ENCODE measurements at regions of chr10 and their contacts with region 1.

Region 1: GRCh38 chr10:6300106-6300783 is 97.5 kb downstream of the PFKFB3 start:
- DNase-seq: peak; percentile 48
- ATAC-seq: peak; percentile 80
- H3K4me3 Mint-ChIP-seq: peak overlapping the region; percentile 75
- H3K27ac Mint-ChIP-seq: peak overlapping the region; percentile 96
- H3K4me1 Mint-ChIP-seq: peaks cover 82% of the 10 kb centered on the region
- H3K27me3 Mint-ChIP-seq: no peaks in the 10 kb centered on the region
- CTCF ChIP-seq: no peak

Region 2: GRCh38 chr10:6247041-6247712 is 53.1 kb before region 1 on chr10:
- CTCF ChIA-PET with region 1: no interaction called
- POLR2A ChIA-PET with region 1: interaction called, 11 read pairs
- intact Hi-C with region 1: no loop called
- DNase-seq: no peak
- ATAC-seq: no peak
- H3K4me3 Mint-ChIP-seq: no peak overlapping the region
- H3K27ac Mint-ChIP-seq: no peak overlapping the region
- H3K4me1 Mint-ChIP-seq: peaks cover 3% of the 10 kb centered on the region
- H3K27me3 Mint-ChIP-seq: no peaks in the 10 kb centered on the region
- CTCF ChIP-seq: no peak

Region 3: GRCh38 chr10:6275022-6275997 is 24.9 kb before region 1 on chr10:
- CTCF ChIA-PET with region 1: interaction called, 3 read pairs
- POLR2A ChIA-PET with region 1: interaction called, 23 read pairs
- intact Hi-C with region 1: loop called (anchors 1 kb)
- DNase-seq: peak; percentile 62
- ATAC-seq: peak; percentile 94
- H3K4me3 Mint-ChIP-seq: peak overlapping the region; percentile 80
- H3K27ac Mint-ChIP-seq: peak overlapping the region; percentile 93
- H3K4me1 Mint-ChIP-seq: peaks cover 28% of the 10 kb centered on the region
- H3K27me3 Mint-ChIP-seq: no peaks in the 10 kb centered on the region
- CTCF ChIP-seq: no peak

Region 4: DNA sequence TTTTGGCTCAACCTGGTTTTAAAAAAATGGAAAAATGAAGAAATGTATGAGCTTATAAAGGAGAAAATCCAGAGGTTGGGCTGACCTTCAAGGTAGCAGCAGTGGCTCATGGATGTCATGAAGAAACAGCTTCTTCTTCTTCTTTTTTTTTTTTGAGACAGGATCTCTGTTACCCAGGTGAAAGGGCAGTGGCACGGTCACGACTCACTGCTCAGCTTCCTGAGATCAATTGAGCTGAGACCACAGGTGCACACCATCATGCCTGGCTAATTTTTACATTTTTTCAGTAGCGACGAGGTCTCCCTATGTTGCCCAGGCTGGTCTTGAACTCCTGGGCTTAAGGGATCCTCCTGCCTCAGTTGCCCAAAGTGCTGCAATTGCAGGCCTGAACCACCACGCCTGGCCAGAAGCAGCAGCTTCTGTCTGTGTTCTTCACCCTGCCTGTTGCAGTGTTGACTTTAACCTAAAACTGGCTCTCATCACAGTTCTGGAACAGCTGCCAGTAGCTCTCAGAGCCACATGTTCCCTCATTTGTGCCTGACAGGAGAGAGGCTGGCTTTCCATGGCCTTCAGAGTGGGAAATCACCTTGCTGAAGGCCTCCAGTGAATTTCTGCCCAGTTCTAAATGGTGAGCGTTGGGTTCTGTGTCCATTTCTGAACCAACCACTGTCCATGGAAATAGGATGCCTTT is 20.2 kb after region 1 on chr10:
- CTCF ChIA-PET with region 1: interaction called, 4 read pairs
- POLR2A ChIA-PET with region 1: interaction called, 19 read pairs
- intact Hi-C with region 1: loop called (anchors 1 kb)
- DNase-seq: peak; percentile 24
- ATAC-seq: peak; percentile 92
- H3K4me3 Mint-ChIP-seq: peak overlapping the region; percentile 57
- H3K27ac Mint-ChIP-seq: no peak overlapping the region
- H3K4me1 Mint-ChIP-seq: peaks cover 23% of the 10 kb centered on the region
- H3K27me3 Mint-ChIP-seq: no peaks in the 10 kb centered on the region
- CTCF ChIP-seq: no peak